ENCODE measurements at regions of chr20 and their contacts with region 1.

Region 1: DNA sequence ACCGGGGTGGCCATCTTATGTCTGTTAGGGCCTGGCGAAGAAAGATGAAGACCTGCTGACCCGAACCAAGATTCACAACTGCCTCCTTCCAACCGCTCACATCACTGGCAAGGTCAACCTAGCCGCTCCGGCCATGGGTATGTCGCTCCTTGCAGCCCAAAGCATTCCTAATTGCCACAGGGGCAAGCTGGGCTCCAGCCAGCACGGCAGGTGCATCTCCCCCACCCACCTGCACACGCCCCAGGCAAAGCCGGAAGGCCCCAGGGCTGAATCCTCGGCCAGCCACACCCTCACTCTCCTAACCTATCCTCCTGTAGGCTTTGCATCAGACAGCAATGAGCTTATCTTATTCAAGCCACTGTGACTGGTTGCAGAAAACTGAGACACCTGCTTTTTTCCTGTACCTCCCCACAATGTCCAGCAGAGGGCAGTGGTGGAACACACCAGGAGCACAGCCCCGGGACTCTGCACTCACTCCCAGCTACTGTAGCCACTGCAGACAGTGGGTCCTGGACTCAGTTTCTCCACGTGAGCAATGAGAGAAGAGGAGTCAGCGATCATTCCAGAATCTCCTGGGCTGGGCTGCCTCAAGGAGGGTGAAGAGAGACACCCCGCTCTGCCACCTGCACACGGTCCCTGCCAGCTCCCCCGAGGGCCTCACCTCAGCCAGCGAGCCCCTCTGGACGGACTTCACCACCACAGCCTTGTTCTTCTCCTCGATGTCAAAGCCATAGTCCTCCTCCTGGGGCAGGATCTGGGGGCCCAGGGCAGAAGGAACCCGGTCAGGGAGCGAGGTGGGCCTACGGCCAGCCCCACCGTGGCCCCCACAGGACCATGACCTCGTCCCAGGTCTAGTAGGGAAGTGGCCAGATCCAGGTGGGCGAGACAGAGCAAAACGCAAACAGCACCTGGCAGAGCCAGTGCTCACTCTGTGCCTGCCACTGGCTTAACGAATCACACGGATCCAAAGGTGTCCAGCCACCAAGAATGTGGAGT is 170.0 kb downstream of the PREX1 start:
- DNase-seq: peak; percentile 44 to 74 (median 64)
- H3K4me3 ChIP-seq: no peak overlapping the region
- H3K4me3 Mint-ChIP-seq: no peak overlapping the region
- H3K27ac ChIP-seq: no peak overlapping the region
- H3K27ac Mint-ChIP-seq: peak overlapping the region; percentile 20 to 89 (median 72)
- H3K4me1 ChIP-seq: no peaks in the 10 kb centered on the region
- H3K4me1 Mint-ChIP-seq: peaks cover 9 to 30% (median 13%) of the 10 kb centered on the region in 3 donors
- H3K27me3 ChIP-seq: no peaks in the 10 kb centered on the region
- H3K27me3 Mint-ChIP-seq: peaks cover 0 to 3% of the 10 kb centered on the region in 2 donors

Region 2: DNA sequence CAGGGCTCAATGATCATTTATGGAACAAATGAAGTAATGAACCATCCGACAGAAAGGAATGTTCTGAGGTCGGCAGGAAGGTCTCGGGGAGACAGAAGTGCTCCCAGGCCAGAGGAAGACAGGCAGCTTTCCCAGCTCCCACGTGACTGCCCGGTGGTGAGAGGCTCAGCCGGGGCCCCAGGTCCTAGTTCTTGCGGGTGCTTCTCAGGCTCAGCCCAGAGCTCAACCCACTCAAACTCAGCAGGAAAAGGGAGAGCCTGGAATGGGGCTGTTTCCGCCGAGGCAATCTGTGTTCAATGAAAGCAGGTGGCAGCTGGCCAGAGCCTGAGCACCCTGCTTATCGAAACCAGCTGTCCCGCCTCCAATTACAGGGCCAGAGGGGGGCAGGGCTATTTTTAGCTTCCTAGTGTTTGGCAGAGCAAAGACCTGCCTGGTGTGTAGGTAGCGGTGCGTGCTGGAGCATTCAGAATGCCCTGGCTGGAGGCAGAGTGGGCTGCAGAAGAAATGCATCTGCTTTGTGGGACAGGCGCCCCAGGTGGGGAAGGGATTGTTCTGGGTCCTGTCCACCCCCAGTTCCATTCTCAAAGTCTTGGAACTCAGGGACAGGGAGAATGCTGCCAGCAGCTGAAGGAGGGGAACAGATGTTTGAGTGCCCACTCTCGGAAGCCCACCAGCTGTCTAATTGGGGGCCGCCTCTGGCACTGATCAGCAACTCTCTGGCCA is 24.9 kb after region 1 on chr20:
- CTCF ChIA-PET with region 1: interaction called, 12 read pairs
- POLR2A ChIA-PET with region 1: no interaction called
- DNase-seq: no peak
- H3K4me3 ChIP-seq: no peak overlapping the region
- H3K4me3 Mint-ChIP-seq: no peak overlapping the region
- H3K27ac ChIP-seq: no peak overlapping the region
- H3K27ac Mint-ChIP-seq: no peak overlapping the region
- H3K4me1 ChIP-seq: no peaks in the 10 kb centered on the region
- H3K4me1 Mint-ChIP-seq: peaks cover 15 to 25% (median 22%) of the 10 kb centered on the region in 3 donors
- H3K27me3 ChIP-seq: no peaks in the 10 kb centered on the region
- H3K27me3 Mint-ChIP-seq: peaks cover 0 to 11% of the 10 kb centered on the region in 2 donors

Region 3: GRCh38 chr20:48797275-48797825 is 139.6 kb after region 1 on chr20:
- CTCF ChIA-PET with region 1: interaction called, 12 read pairs
- POLR2A ChIA-PET with region 1: no interaction called
- DNase-seq: peak in 1 of 5 donors; percentile 18
- H3K4me3 ChIP-seq: no peak overlapping the region
- H3K4me3 Mint-ChIP-seq: peak overlapping the region in 2 of 7 donors; percentile 35 to 78
- H3K27ac ChIP-seq: no peak overlapping the region
- H3K27ac Mint-ChIP-seq: peak overlapping the region in 7 of 8 donors; percentile 31 to 97 (median 80)
- H3K4me1 ChIP-seq: peaks cover 42% of the 10 kb centered on the region
- H3K4me1 Mint-ChIP-seq: peaks cover 58 to 97% (median 82%) of the 10 kb centered on the region in 3 donors
- H3K27me3 ChIP-seq: no peaks in the 10 kb centered on the region
- H3K27me3 Mint-ChIP-seq: peaks cover 0 to 2% of the 10 kb centered on the region in 2 donors

Region 4: GRCh38 chr20:48904365-48905296 is 246.9 kb after region 1 on chr20:
- CTCF ChIA-PET with region 1: interaction called, 156 read pairs
- POLR2A ChIA-PET with region 1: interaction called, 11 read pairs
- DNase-seq: peak; percentile 42 to 76 (median 55)
- H3K4me3 ChIP-seq: no peak overlapping the region
- H3K4me3 Mint-ChIP-seq: peak overlapping the region in 1 of 7 donors; percentile 81
- H3K27ac ChIP-seq: no peak overlapping the region
- H3K27ac Mint-ChIP-seq: peak overlapping the region in 1 of 8 donors; percentile 14
- H3K4me1 ChIP-seq: no peaks in the 10 kb centered on the region
- H3K4me1 Mint-ChIP-seq: peaks cover 7 to 12% (median 10%) of the 10 kb centered on the region in 3 donors
- H3K27me3 ChIP-seq: no peaks in the 10 kb centered on the region
- H3K27me3 Mint-ChIP-seq: peaks cover 0 to 1% of the 10 kb centered on the region in 2 donors

Region 5: GRCh38 chr20:49237531-49237930 is 579.8 kb after region 1 on chr20:
- CTCF ChIA-PET with region 1: no interaction called
- POLR2A ChIA-PET with region 1: no interaction called
- DNase-seq: no peak
- H3K4me3 ChIP-seq: no peak overlapping the region
- H3K4me3 Mint-ChIP-seq: no peak overlapping the region
- H3K27ac ChIP-seq: no peak overlapping the region
- H3K27ac Mint-ChIP-seq: peak overlapping the region in 6 of 8 donors; percentile 5 to 62 (median 27)
- H3K4me1 ChIP-seq: no peaks in the 10 kb centered on the region
- H3K4me1 Mint-ChIP-seq: peaks cover 0 to 4% (median 0%) of the 10 kb centered on the region in 3 donors
- H3K27me3 ChIP-seq: no peaks in the 10 kb centered on the region
- H3K27me3 Mint-ChIP-seq: no peaks in the 10 kb centered on the region

Measured in CD8-positive, alpha-beta memory T cell (primary cell).